ENCODE measurements at regions of chr18 and their contacts with region 1.

Region 1: DNA sequence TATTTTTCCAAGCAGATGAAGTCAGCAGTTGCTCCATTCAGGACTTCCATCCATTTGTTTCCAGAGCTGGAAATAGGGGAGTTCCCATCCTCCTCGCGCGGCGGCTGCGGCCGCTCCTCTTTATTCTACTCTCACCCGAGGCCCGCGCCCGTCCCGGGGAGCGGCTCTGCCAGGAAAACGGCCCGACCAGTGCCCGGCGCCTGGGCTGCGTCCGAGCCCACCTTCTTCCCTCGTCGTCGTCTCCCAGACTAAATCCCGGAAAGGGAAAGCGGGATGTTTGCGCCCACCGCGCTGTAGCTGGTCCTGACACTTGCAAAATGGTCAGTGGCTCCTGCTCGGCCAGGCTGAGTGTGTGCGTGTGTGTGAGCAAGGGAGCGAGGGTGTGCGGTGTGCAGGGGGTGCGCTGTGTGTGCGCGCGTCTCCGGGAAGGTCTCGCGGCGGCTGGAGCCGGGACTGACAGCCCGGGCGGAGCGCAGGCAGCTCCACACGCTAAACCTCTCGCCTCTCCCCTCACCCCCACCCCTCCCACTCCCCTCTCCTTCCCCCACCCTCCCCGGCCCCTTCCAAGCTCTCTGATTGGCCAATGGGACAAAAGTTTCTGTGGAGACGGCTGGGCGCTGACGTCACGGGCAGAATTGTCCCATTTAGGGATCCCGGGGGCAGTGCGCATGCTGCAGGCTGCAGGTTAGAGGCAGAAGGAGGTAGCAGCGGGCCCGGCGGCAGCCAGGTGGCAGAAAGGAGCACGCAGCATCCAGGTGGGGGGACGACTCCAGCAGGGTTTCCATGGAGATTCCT is at the start of gene NOL4:
- DNase-seq: no peak
- ATAC-seq: peak; percentile 45
- H3K4me3 ChIP-seq: no peak within 1 kb of the TSS
- H3K27ac ChIP-seq: no peak within 1 kb of the TSS
- H3K4me1 ChIP-seq: no peaks in the 10 kb centered on the region
- H3K27me3 ChIP-seq: peaks cover 0 to 13% of the 10 kb centered on the region in 2 experiments
- CTCF ChIP-seq: peak in 2 of 3 experiments; percentile 51 to 66; a peak in 4 of 6 replicates
- EP300 ChIP-seq: no peak
- POLR2A ChIP-seq: no peak
- RAD21 ChIP-seq: peak; percentile 6; the same call in 1 of the 2 replicates
- polyA plus RNA-seq, gene NOL4: 1.3 to 2.8 TPM

Region 2: DNA sequence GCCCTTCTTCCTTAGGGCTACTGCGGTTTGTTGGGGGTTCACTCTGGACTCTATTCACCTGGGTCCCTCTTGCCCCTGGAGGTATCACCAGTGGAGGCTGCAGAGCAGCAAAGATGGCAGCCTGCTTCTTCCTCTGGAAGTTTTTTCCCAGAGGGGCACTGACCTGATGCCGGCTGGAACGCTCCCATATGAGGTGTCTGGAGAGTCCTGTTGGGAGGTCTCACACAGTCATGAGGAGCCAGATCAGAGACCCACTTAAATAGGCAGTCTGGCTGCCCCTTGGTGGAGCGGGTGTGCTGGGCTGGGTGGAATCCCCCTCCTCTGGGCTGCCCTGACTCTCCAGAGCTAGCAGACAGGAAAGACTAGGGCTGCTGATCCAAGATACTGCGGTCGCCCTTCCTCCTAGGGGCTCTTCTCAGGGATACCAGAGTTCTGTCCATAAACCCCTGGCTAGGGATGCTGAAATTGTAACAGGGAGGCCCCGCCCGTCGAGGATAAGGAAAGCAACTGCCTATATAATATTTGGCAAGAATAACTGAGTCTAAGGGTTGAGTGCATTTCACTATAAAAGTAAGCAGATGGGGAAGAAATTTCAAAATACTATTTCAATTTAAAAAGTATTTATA is 140.6 kb before region 1 on chr18:
- CTCF ChIA-PET with region 1: no interaction called
- POLR2A ChIA-PET with region 1: no interaction called
- RAD21 ChIA-PET with region 1: no interaction called
- SMC1A ChIA-PET with region 1: no interaction called
- in situ Hi-C with region 1: no loop called
- intact Hi-C with region 1: no loop called
- DNase-seq: no peak
- ATAC-seq: no peak
- H3K4me3 ChIP-seq: no peak overlapping the region
- H3K27ac ChIP-seq: no peak overlapping the region
- H3K4me1 ChIP-seq: no peaks in the 10 kb centered on the region
- H3K27me3 ChIP-seq: no peaks in the 10 kb centered on the region
- CTCF ChIP-seq: no peak
- EP300 ChIP-seq: no peak
- POLR2A ChIP-seq: no peak
- RAD21 ChIP-seq: no peak

Region 3: GRCh38 chr18:34128436-34128835 is 96.2 kb before region 1 on chr18:
- CTCF ChIA-PET with region 1: interaction called, 31 read pairs
- POLR2A ChIA-PET with region 1: no interaction called
- RAD21 ChIA-PET with region 1: interaction called, 47 read pairs
- SMC1A ChIA-PET with region 1: interaction called, 34 read pairs
- in situ Hi-C with region 1: no loop called
- intact Hi-C with region 1: loop called (anchors 2 kb)
- DNase-seq: no peak
- ATAC-seq: no peak
- H3K4me3 ChIP-seq: no peak overlapping the region
- H3K27ac ChIP-seq: no peak overlapping the region
- H3K4me1 ChIP-seq: no peaks in the 10 kb centered on the region
- H3K27me3 ChIP-seq: no peaks in the 10 kb centered on the region
- CTCF ChIP-seq: no peak
- EP300 ChIP-seq: no peak
- POLR2A ChIP-seq: no peak
- RAD21 ChIP-seq: no peak

Region 4: GRCh38 chr18:34212511-34212910 is 12.1 kb before region 1 on chr18:
- CTCF ChIA-PET with region 1: interaction called, 11 read pairs
- POLR2A ChIA-PET with region 1: interaction called, 11 read pairs
- RAD21 ChIA-PET with region 1: interaction called, 20 read pairs
- SMC1A ChIA-PET with region 1: interaction called, 9 read pairs
- in situ Hi-C with region 1: no loop called
- intact Hi-C with region 1: no loop called
- DNase-seq: no peak
- ATAC-seq: peak; percentile 51
- H3K4me3 ChIP-seq: no peak overlapping the region
- H3K27ac ChIP-seq: no peak overlapping the region
- H3K4me1 ChIP-seq: no peaks in the 10 kb centered on the region
- H3K27me3 ChIP-seq: no peaks in the 10 kb centered on the region
- CTCF ChIP-seq: no peak
- EP300 ChIP-seq: no peak
- POLR2A ChIP-seq: no peak
- RAD21 ChIP-seq: no peak

Region 5: DNA sequence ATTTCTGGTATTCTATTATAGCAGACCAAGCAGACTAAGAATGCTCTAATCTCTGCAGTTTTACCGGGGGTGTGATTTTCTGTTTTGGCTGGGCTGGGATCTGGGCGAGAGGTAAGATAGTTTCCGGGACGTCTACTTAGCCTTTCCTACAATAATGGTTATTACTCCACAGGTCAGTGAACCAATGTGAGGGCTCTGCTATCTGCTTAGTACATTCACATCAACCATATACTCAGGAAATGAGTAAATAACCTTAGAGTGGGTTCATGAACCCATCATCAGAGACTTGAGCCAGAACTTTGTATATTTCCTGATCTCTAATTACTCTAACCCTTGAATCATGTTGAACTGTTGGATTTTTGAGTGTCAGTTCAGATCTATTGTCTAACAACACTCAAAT is 90.2 kb after region 1 on chr18:
- CTCF ChIA-PET with region 1: interaction called, 88 read pairs
- POLR2A ChIA-PET with region 1: interaction called, 3 read pairs
- RAD21 ChIA-PET with region 1: interaction called, 59 read pairs
- SMC1A ChIA-PET with region 1: interaction called, 25 read pairs
- in situ Hi-C with region 1: no loop called
- intact Hi-C with region 1: no loop called
- DNase-seq: no peak
- ATAC-seq: no peak
- H3K4me3 ChIP-seq: no peak overlapping the region
- H3K27ac ChIP-seq: no peak overlapping the region
- H3K4me1 ChIP-seq: no peaks in the 10 kb centered on the region
- H3K27me3 ChIP-seq: no peaks in the 10 kb centered on the region
- CTCF ChIP-seq: no peak
- EP300 ChIP-seq: no peak
- POLR2A ChIP-seq: no peak
- RAD21 ChIP-seq: no peak

Measured in GM12878 (cell line).